Endothelial cell of umbilical vein (primary cell): ENCODE measurements at regions of chrX and their contacts with region 1.

Region 1: DNA sequence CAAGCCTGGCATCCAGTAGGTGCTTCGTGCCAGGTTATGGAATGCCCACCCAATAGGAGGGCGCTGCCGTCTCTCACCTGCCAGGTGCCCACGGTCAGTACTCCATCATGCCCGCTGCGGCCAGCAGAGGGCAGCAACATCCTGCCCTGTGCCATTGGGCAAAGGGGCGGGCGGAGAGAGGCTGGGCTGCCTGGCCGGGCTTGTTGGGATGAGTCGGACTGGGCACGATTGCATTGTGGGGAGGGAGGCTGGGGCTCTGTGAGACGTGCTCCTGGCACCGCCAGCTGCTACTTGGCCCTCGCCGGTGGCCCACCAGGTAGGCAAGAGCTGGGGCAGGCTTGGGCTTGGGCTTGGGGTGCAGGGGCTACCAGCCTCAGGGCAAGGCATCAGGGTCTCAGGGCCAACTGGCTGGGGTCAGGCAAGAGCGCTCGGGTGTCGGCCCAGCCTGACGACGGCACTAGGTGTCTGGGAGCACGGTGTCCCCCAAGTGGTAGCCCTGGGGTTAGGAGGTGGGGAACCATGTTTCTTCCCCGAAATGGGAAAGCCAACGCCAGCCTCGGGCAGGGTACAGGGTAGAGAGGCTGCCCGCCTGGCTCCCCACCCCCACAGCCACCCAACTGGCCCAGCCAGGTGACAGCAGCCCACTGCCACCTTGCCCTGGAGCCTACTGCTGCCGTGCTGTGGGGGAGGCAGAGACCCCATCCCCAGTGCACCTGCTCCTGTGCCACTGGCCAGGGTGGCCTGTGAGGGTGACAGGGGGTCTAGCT is at the start of gene PLXNB3:
- DNase-seq: peak; percentile 56
- H3K4me3 ChIP-seq: peak within 1 kb of the TSS in 1 of 3 experiments; percentile 28
- H3K27ac ChIP-seq: peak within 1 kb of the TSS; percentile 75
- H3K4me1 ChIP-seq: peaks cover 20% of the 10 kb centered on the region
- H3K27me3 ChIP-seq: no peaks in the 10 kb centered on the region
- CTCF ChIP-seq: peak; percentile 76 to 86
- POLR2A ChIP-seq: no peak
- total RNA-seq, gene PLXNB3: 29.7 and 31.4 TPM in 2 replicates

Region 2: DNA sequence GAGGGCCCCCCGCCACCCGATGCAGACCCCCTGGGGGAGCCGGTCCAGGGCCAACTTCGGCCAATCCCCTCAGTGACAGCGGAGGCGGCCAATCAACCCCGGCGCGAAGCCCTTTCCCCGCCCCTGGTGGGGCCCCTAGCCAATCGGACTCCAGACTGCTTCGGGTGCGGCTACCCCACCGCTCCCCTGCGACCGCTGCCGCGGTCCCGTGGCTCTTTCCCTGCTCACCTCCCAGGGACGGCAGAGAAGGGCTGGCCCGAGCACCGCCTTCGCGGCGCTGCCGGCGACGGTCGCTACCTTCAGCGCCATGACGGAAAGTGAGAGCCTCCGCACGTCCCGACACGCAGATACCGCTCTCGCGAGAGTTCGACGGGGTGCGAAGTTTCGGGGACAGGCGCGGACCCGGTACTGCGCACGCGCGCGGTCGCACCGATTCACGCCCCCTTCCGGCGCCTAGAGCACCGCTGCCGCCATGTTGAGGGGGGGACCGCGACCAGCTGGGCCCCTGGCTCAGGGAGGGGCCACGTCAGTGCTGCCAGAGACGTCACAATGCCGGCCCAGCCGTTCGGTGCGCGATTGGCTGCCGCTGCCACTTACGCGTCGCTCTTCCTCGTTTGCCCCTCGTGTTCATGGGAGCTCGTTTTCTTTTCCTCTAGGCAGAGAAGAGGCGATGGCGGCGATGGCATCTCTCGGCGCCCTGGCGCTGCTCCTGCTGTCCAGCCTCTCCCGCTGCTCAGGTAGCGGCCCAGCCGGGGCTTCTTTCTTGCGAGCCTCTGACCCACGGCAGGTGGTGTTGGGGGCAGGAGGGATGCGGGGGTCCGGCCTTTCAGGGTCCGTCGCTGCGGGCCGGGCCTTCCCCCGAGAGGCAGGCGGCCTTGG is 30.1 kb after region 1 on chrX and contains the starts of genes IDH3G and SSR4:
- CTCF ChIA-PET with region 1: no interaction called
- POLR2A ChIA-PET with region 1: no interaction called
- dilution Hi-C with region 1: no loop called
- intact Hi-C with region 1: loop called (anchors 2 kb)
- DNase-seq: peak; percentile 96
- H3K4me3 ChIP-seq: peak within 1 kb of the TSS; percentile 39 to 84 (median 78)
- H3K27ac ChIP-seq: peak within 1 kb of the TSS; percentile 87
- H3K4me1 ChIP-seq: peaks cover 15% of the 10 kb centered on the region
- H3K27me3 ChIP-seq: no peaks in the 10 kb centered on the region
- CTCF ChIP-seq: no peak
- POLR2A ChIP-seq: peak; percentile 76
- total RNA-seq, gene IDH3G: 57.7 and 60.7 TPM in 2 replicates
- total RNA-seq, gene SSR4: 235 and 242 TPM in 2 replicates

Region 3: GRCh38 chrX:153927922-153928760 is 164.0 kb after region 1 on chrX:
- CTCF ChIA-PET with region 1: interaction called, 20 read pairs
- POLR2A ChIA-PET with region 1: interaction called, 3 read pairs
- dilution Hi-C with region 1: no loop called
- intact Hi-C with region 1: loop called (anchors 1 kb)
- DNase-seq: peak; percentile 98
- H3K4me3 ChIP-seq: peak overlapping the region in 2 of 3 experiments; percentile 44 to 49
- H3K27ac ChIP-seq: peak overlapping the region; percentile 100
- H3K4me1 ChIP-seq: peaks cover 44% of the 10 kb centered on the region
- H3K27me3 ChIP-seq: no peaks in the 10 kb centered on the region
- CTCF ChIP-seq: no peak
- POLR2A ChIP-seq: no peak

Region 4: DNA sequence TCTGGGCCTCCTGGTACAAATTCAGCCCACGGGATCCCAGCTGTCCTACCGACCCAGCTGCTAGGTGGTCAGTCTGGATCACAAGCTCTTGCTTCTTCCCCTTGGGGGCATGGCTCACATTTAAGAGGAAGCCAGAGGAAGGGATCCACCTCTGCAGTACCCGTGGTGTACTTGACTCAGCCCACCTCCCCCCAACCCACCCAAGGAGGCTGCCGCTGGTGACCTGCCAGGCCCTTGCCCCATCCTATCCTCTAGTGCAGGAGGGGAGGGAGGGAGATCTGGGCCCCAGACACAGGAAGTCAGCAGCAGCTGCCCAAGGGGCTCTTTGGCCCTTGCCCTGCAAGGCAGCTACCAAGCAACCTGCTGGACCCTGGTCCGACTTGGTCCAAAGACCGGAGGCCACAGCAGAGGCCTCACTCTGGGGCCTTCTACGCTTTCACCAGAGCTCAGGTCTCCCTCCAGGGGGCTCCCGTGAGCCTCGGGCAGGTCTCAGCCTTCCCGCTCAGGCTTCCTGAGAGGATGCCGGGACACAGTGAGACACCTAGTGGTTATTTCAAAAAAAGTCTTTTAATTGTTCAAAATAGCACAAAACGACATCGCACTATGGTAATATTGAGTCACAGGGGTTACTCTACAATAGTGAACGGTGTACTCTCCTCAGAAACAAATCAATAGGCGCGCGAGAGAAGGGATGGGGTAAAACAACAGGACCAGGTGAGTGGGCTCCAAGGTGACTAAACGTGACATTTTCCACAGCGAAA is 183.0 kb after region 1 on chrX:
- CTCF ChIA-PET with region 1: interaction called, 68 read pairs
- POLR2A ChIA-PET with region 1: no interaction called
- dilution Hi-C with region 1: no loop called
- intact Hi-C with region 1: loop called (anchors 1 kb)
- DNase-seq: peak; percentile 79
- H3K4me3 ChIP-seq: no peak overlapping the region
- H3K27ac ChIP-seq: peak overlapping the region; percentile 38
- H3K4me1 ChIP-seq: peaks cover 31% of the 10 kb centered on the region
- H3K27me3 ChIP-seq: no peaks in the 10 kb centered on the region
- CTCF ChIP-seq: peak; percentile 81 to 85
- POLR2A ChIP-seq: no peak

Region 5: GRCh38 chrX:153953342-153953830 is 189.2 kb after region 1 on chrX:
- CTCF ChIA-PET with region 1: interaction called, 68 read pairs
- POLR2A ChIA-PET with region 1: no interaction called
- dilution Hi-C with region 1: no loop called
- intact Hi-C with region 1: loop called (anchors 1 kb)
- DNase-seq: peak; percentile 42
- H3K4me3 ChIP-seq: no peak overlapping the region
- H3K27ac ChIP-seq: no peak overlapping the region
- H3K4me1 ChIP-seq: peaks cover 21% of the 10 kb centered on the region
- H3K27me3 ChIP-seq: no peaks in the 10 kb centered on the region
- CTCF ChIP-seq: peak; percentile 79 to 84
- POLR2A ChIP-seq: no peak

Region 6: GRCh38 chrX:154046031-154046781 is 282.0 kb after region 1 on chrX:
- CTCF ChIA-PET with region 1: no interaction called
- POLR2A ChIA-PET with region 1: no interaction called
- dilution Hi-C with region 1: no loop called
- intact Hi-C with region 1: loop called (anchors 10 kb)
- DNase-seq: peak; percentile 93
- H3K4me3 ChIP-seq: no peak overlapping the region
- H3K27ac ChIP-seq: peak overlapping the region; percentile 87
- H3K4me1 ChIP-seq: peaks cover 32% of the 10 kb centered on the region
- H3K27me3 ChIP-seq: no peaks in the 10 kb centered on the region
- CTCF ChIP-seq: peak in 1 of 2 donors; percentile 15
- POLR2A ChIP-seq: no peak